CD8-positive, alpha-beta T cell (primary cell): ENCODE measurements at regions of chr6 and their contacts with region 1.

Region 1: DNA sequence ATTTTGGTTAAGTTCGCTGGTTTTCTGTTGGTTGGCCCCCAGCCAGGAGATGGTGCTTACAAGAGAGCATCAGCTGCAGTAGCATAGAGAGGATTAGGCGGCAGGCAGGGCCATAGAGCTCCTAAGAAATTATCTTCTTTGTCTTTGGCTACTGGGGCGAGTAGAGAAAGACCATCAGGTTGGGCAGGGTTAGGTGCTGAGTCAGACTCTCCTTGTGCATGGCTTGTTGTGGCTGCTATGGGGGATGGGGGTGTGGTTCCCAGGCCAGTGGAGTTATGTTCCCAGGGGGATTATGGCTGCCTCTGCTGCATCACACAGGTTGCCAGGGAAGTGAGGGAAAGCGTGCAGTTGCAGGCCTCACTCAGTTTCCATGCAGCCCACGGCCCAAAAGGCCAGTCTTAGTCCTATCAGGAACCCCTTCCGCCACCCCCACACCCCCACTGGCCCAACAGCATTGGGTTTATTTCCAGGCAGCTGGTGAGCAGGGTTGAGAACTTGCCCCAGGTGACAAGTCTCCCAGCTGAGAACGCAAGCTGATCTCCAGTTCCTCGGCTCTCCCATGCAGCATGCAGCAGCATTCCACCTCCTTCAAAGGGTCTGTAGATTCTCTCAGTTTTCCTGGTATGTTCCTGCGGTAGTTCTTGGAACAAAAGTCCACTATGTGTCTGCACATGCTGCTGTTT is 243.7 kb downstream of the UTRN start:
- DNase-seq: no peak
- ATAC-seq: no peak
- H3K4me3 ChIP-seq: no peak overlapping the region
- H3K4me3 Mint-ChIP-seq: no peak overlapping the region
- H3K27ac ChIP-seq: no peak overlapping the region
- H3K27ac Mint-ChIP-seq: peak overlapping the region; percentile 49
- H3K4me1 ChIP-seq: no peaks in the 10 kb centered on the region
- H3K4me1 Mint-ChIP-seq: peaks cover 4% of the 10 kb centered on the region
- H3K27me3 ChIP-seq: no peaks in the 10 kb centered on the region
- H3K27me3 Mint-ChIP-seq: no peaks in the 10 kb centered on the region
- CTCF ChIP-seq: no peak

Region 2: GRCh38 chr6:144510859-144511258 is 18.0 kb before region 1 on chr6:
- CTCF ChIA-PET with region 1: no interaction called
- POLR2A ChIA-PET with region 1: no interaction called
- intact Hi-C with region 1: loop called in 1 of 2 experiments (anchors 2 kb)
- DNase-seq: no peak
- ATAC-seq: no peak
- H3K4me3 ChIP-seq: no peak overlapping the region
- H3K4me3 Mint-ChIP-seq: no peak overlapping the region
- H3K27ac ChIP-seq: no peak overlapping the region
- H3K27ac Mint-ChIP-seq: no peak overlapping the region
- H3K4me1 ChIP-seq: no peaks in the 10 kb centered on the region
- H3K4me1 Mint-ChIP-seq: peaks cover 14% of the 10 kb centered on the region
- H3K27me3 ChIP-seq: no peaks in the 10 kb centered on the region
- H3K27me3 Mint-ChIP-seq: no peaks in the 10 kb centered on the region
- CTCF ChIP-seq: no peak